Panc1 (cell line): ENCODE measurements at regions of chr6 and their contacts with region 1.

Region 1: DNA sequence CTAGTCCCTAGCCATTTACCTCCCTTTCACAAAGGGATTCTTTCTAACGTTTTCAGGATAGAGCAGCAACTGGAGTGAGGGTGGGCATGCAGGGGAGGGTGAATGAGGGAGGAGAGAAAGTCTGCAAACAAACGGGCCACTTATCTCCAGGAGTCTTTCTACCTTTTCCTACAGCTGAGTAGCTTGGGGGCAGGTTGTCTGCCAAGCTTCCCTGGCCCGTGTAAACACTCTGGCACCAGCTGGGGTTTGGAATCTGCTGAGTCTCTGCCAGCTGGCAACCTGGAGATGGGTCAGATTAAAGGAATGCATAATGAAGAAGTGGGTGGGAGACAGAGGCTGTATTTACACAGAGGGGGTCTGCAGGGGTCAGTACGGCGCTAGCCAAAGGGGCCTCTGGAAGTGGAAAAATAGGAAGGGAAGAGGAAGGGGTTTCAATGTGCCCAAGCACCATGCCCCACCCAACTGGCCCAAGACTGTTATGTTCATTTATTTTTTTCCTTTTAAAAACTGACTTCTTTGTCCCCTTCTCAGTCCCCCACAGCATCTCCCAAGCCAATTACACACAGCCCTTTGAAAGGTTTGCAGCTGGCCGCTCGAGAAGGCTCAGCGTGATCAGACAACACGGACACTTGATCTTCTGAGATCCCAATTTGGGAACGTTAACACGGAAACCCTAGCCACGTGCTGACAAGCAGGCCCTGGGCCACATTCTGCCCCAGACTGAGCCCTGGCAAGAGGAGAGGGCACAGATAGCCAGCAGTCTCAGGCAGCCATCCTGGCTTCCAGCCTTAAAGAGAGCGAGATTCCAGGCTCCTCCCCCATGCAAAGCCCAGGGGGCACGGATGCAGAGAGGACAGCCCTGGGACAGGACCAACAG is 25.2 kb downstream of the TRAM2 start:
- DNase-seq: no peak
- ATAC-seq: peak; percentile 85
- H3K4me3 ChIP-seq: peak overlapping the region; percentile 12 to 43; a peak in 3 of 4 replicates
- H3K27ac ChIP-seq: peak overlapping the region; percentile 92
- H3K4me1 ChIP-seq: peaks cover 81% of the 10 kb centered on the region
- H3K27me3 ChIP-seq: no peaks in the 10 kb centered on the region
- CTCF ChIP-seq: no peak

Region 2: GRCh38 chr6:52647199-52647598 is 95.6 kb after region 1 on chr6:
- CTCF ChIA-PET with region 1: interaction called, 11 read pairs
- POLR2A ChIA-PET with region 1: no interaction called
- in situ Hi-C with region 1: no loop called
- intact Hi-C with region 1: no loop called
- DNase-seq: no peak
- ATAC-seq: no peak
- H3K4me3 ChIP-seq: no peak overlapping the region
- H3K27ac ChIP-seq: no peak overlapping the region
- H3K4me1 ChIP-seq: no peaks in the 10 kb centered on the region
- H3K27me3 ChIP-seq: no peaks in the 10 kb centered on the region
- CTCF ChIP-seq: no peak

Region 3: GRCh38 chr6:52808660-52809059 is 257.0 kb after region 1 on chr6:
- CTCF ChIA-PET with region 1: no interaction called
- POLR2A ChIA-PET with region 1: no interaction called
- in situ Hi-C with region 1: no loop called
- intact Hi-C with region 1: no loop called
- DNase-seq: no peak
- ATAC-seq: no peak
- H3K4me3 ChIP-seq: no peak overlapping the region
- H3K27ac ChIP-seq: no peak overlapping the region
- H3K4me1 ChIP-seq: no peaks in the 10 kb centered on the region
- H3K27me3 ChIP-seq: no peaks in the 10 kb centered on the region
- CTCF ChIP-seq: no peak

Region 4: GRCh38 chr6:52904562-52905279 is 353.1 kb after region 1 on chr6:
- CTCF ChIA-PET with region 1: no interaction called
- POLR2A ChIA-PET with region 1: no interaction called
- in situ Hi-C with region 1: no loop called
- intact Hi-C with region 1: no loop called
- DNase-seq: no peak
- ATAC-seq: peak; percentile 71
- H3K4me3 ChIP-seq: no peak overlapping the region
- H3K27ac ChIP-seq: no peak overlapping the region
- H3K4me1 ChIP-seq: no peaks in the 10 kb centered on the region
- H3K27me3 ChIP-seq: no peaks in the 10 kb centered on the region
- CTCF ChIP-seq: peak; percentile 62